Activated CD8-positive, alpha-beta T cell treated with anti-CD3 and anti-CD28 coated beads for 36 hours (primary cell): ENCODE measurements at regions of chr17 and their contacts with region 1.

Region 1: GRCh38 chr17:2309338-2310154 is 5.8 kb downstream of the SRR start:
- DNase-seq: no peak
- ATAC-seq: no peak
- H3K4me3 Mint-ChIP-seq: no peak overlapping the region
- H3K27ac Mint-ChIP-seq: no peak overlapping the region
- H3K4me1 Mint-ChIP-seq: peaks cover 22% of the 10 kb centered on the region
- H3K27me3 Mint-ChIP-seq: no peaks in the 10 kb centered on the region
- CTCF ChIP-seq: no peak

Region 2: GRCh38 chr17:2331303-2331702 is 21.8 kb after region 1 on chr17:
- CTCF ChIA-PET with region 1: interaction called, 5 read pairs
- POLR2A ChIA-PET with region 1: interaction called, 10 read pairs
- intact Hi-C with region 1: no loop called
- DNase-seq: no peak
- ATAC-seq: no peak
- H3K4me3 Mint-ChIP-seq: no peak overlapping the region
- H3K27ac Mint-ChIP-seq: no peak overlapping the region
- H3K4me1 Mint-ChIP-seq: peaks cover 13% of the 10 kb centered on the region
- H3K27me3 Mint-ChIP-seq: no peaks in the 10 kb centered on the region
- CTCF ChIP-seq: no peak

Region 3: DNA sequence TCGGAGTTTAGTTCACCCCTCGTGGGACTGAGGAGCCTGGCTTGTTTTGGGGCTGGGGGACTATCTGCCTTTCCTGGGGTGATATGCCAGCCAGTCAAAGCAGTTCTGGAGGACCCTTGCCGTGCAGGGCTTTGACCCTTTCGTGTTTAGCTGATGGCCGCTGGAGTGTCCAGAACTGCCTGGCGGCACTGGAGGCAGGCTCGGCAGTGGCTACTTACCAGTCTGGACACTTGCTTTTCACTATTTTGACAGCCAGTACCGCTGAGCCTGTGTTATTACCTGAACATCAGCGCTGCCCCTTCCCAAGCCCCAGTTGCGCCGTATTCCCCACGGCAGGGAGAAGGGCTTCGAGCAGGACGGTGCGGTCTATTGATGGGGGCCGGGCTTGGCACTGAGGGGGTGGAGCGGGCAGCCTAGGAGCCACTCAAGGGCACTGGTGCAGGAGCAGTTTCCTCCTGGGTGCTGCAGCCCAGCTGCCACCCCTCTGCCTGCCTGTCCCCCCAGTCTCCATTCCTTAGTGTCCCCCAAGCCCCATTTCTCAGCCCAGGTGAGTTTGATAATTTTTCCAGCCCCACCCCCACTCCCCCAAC is 421.3 kb after region 1 on chr17:
- CTCF ChIA-PET with region 1: no interaction called
- POLR2A ChIA-PET with region 1: no interaction called
- intact Hi-C with region 1: no loop called
- DNase-seq: no peak
- ATAC-seq: no peak
- H3K4me3 Mint-ChIP-seq: no peak overlapping the region
- H3K27ac Mint-ChIP-seq: no peak overlapping the region
- H3K4me1 Mint-ChIP-seq: no peaks in the 10 kb centered on the region
- H3K27me3 Mint-ChIP-seq: peaks cover 22% of the 10 kb centered on the region
- CTCF ChIP-seq: no peak